ENCODE measurements at regions of chr9 and their contacts with region 1.

Region 1: GRCh38 chr9:122904823-122905710 is at the start of gene RC3H2:
- DNase-seq: peak; percentile 97
- ATAC-seq: peak; percentile 93
- H3K4me3 Mint-ChIP-seq: peak within 1 kb of the TSS; percentile 92
- H3K27ac Mint-ChIP-seq: peak within 1 kb of the TSS; percentile 94
- H3K4me1 Mint-ChIP-seq: peaks cover 23% of the 10 kb centered on the region
- H3K27me3 Mint-ChIP-seq: no peaks in the 10 kb centered on the region
- total RNA-seq, gene RC3H2: 21.5 to 24.4 TPM

Region 2: DNA sequence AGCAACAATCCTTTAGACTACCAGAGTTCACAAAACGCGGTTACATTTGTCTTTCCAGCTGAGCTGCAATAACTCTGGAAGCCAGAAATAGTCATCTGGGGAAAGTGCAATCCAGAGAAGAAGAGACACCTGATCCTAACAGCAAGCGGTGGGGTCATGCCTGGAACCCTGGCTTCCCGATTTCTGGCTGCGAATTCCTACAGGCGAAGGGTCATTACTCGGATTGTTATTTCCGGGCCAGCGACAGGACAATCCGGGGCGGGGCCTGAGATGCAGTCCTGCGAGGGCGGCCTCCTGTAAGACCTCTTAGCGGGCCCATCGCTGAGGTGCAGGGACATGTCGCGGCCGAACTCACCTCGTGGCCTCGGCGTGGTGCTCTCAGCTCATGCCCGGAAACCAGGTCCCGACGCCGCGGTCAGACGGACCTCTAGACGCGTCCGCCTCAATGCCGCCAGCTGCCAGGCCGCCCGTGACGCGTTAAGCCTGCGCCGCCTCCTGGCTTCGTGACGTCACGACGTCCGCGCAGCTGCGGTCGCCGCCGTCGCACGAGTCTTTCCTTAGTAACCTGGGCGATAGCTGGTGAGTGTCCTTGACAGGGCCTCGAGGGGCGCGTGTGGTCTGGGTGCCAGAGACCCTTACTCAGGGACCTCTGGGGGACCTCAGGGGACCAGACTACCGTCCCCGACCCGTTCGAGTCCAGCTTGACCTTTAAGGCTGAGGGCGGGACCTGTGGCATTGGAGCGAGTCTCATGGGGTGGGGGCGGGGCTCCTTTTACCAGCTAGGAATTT is 640.5 kb before region 1 on chr9 and contains the starts of genes MRRF and RBM18:
- CTCF ChIA-PET with region 1: no interaction called
- POLR2A ChIA-PET with region 1: interaction called, 3 read pairs
- intact Hi-C with region 1: loop called in 1 of 2 experiments (anchors 10 kb)
- DNase-seq: peak; percentile 93
- ATAC-seq: peak; percentile 83
- H3K4me3 Mint-ChIP-seq: peak within 1 kb of the TSS; percentile 98
- H3K27ac Mint-ChIP-seq: peak within 1 kb of the TSS; percentile 99
- H3K4me1 Mint-ChIP-seq: peaks cover 44% of the 10 kb centered on the region
- H3K27me3 Mint-ChIP-seq: no peaks in the 10 kb centered on the region
- total RNA-seq, gene MRRF: 57.3 to 61.5 TPM
- total RNA-seq, gene RBM18: 22.3 to 28.6 TPM

Region 3: DNA sequence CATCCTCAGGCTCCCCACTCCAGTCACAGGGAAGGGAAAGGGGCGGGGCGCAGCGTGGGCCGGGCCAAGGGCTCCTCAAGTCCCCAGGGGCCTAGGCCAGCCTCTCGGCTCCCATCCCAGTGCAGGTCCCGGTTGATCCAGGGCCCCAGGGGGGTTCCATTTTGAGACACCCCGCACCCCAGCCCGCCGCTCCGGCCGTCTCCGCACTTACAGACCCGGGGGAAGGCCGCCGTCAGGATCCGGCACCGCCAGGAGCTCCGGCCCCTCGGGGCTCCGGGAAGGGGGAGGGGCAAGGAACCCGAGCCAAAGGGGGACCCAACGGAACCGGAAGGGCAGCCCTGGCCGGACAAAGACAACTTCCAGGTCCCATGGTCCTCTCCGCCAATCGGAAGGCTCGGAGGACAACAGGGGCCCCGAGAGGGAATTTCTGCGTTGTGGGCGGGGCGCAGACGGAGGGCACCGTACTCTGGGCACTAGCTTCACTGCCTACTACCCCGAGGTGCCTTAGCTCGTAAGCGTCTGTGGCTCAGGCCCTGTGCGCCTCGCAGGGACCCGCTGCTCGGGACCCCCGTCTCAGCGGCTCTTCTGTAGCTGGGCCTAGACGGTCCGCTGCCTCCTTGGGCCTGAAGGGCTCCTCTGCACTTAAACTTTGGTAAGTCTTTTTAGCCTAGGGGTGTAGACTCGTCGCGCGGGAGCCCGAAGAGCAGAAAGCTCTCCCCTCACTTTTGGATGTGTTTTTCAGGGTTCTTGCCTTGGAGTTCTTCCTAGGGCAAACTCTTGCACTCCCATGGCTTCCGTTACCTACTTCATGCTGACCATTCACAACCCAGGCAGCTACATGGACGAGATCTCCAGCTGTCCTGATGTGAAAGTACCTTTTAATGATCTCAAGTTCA is 26.4 kb after region 1 on chr9 and contains the start of gene ZBTB26:
- CTCF ChIA-PET with region 1: interaction called, 9 read pairs
- POLR2A ChIA-PET with region 1: interaction called, 9 read pairs
- intact Hi-C with region 1: loop called (anchors 1 to 2 kb)
- DNase-seq: peak; percentile 95
- ATAC-seq: peak; percentile 99
- H3K4me3 Mint-ChIP-seq: no peak within 1 kb of the TSS
- H3K27ac Mint-ChIP-seq: peak within 1 kb of the TSS; percentile 98
- H3K4me1 Mint-ChIP-seq: peaks cover 12% of the 10 kb centered on the region
- H3K27me3 Mint-ChIP-seq: no peaks in the 10 kb centered on the region
- total RNA-seq, gene ZBTB26: 6.0 TPM

Region 4: DNA sequence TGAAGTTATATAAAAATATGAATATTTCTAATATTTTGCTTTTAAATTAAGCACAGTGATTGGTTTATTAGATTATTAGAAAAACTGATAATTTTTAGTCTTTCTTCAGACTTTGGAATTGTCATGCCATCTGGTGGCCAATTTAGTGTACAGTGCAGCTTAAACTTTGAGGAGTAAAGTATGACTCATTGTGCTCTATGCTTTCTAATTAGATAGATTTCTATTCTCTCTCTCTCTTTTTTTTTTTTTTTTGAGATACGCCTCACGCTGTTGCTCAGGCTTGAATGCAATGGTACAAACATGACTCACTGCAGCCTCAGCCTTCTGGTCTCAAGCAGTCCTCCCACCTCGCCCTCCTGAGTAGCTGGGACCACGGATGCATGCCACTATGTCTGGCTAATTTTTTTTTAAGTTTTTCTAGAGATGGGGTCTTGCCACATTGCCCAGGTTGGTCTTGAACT is 86.3 kb after region 1 on chr9:
- CTCF ChIA-PET with region 1: interaction called, 4 read pairs
- POLR2A ChIA-PET with region 1: no interaction called
- intact Hi-C with region 1: loop called (anchors 2 to 5 kb)
- DNase-seq: peak; percentile 66
- ATAC-seq: peak; percentile 90
- H3K4me3 Mint-ChIP-seq: no peak overlapping the region
- H3K27ac Mint-ChIP-seq: no peak overlapping the region
- H3K4me1 Mint-ChIP-seq: peaks cover 7% of the 10 kb centered on the region
- H3K27me3 Mint-ChIP-seq: no peaks in the 10 kb centered on the region

Measured in activated CD4-positive, alpha-beta T cell treated with anti-CD3 and anti-CD28 coated beads for 36 hours (primary cell).